ENCODE measurements at regions of chr1 and their contacts with region 1.

Region 1: DNA sequence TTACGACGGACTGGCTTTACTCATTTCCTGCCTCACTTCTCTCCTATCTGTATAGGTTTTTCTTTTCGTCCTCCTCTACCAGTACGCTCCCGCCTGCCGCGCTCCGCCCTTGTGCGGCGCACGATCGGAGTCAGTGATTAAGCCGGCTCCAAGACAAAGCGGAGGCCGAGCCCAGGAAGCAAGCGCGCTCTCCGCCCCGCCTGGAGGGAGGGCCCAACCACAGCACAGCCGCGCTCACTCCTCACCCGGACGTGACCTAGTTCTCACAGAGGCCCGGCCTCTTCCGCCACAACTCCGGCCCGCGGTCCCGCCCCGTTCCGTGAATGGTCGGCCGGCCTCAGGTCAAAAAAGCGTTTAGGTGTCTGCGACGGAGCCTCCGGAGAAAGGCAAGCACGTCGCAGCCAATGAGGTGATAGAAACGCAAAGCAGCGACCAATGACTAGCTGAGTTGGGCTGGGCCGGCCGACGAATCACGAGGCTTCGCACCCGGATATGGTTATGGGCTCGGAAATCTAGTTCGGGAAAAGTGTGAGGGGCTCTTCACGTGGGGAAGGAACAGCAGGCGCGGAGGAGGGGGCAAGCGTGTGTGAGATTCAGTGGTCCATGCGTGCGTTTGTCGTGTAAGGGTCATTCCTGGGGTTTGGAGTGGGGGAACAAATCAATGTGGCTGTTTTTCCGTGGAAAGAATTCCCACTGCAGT is at the start of gene METTL13:
- DNase-seq: peak; percentile 99
- ATAC-seq: peak; percentile 98
- H3K4me3 ChIP-seq: peak within 1 kb of the TSS; percentile 81
- H3K27ac ChIP-seq: peak within 1 kb of the TSS; percentile 77
- H3K4me1 ChIP-seq: no peaks in the 10 kb centered on the region
- H3K27me3 ChIP-seq: no peaks in the 10 kb centered on the region
- CTCF ChIP-seq: 0 out of 2 replicates have a peak, but pooled peaks have one; percentile 6
- POLR2A ChIP-seq: peak; percentile 87
- RAD21 ChIP-seq: 0 out of 2 replicates have a peak, but pooled peaks have one; percentile 9
- total RNA-seq, gene METTL13: 25.8 and 26.3 TPM in 2 replicates

Region 2: DNA sequence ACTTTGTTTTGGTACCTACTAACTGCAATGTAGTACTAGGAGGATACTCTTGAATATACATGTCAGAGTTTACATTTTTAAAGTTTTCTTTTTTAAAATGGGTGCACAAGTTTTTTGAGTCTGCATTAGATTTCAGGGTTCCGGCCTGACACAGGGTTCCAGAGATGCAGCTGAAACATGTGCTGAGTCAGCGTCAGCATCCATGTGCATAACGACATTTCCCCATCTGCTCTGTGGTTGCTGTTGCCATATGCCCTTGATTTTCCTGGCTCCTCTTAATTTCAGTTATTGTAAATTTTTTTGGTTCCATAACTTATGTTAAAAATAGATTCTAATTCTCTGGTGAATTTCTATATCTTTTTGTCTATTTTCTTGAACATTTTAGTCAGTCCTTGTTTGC is 12.2 kb before region 1 on chr1:
- CTCF ChIA-PET with region 1: no interaction called
- POLR2A ChIA-PET with region 1: no interaction called
- dilution Hi-C with region 1: no loop called
- in situ Hi-C with region 1: no loop called
- intact Hi-C with region 1: loop called (anchors 1 kb)
- DNase-seq: no peak
- ATAC-seq: no peak
- H3K4me3 ChIP-seq: no peak overlapping the region
- H3K27ac ChIP-seq: no peak overlapping the region
- H3K4me1 ChIP-seq: no peaks in the 10 kb centered on the region; the same call in 1 of the 2 replicates
- H3K27me3 ChIP-seq: no peaks in the 10 kb centered on the region
- CTCF ChIP-seq: no peak
- POLR2A ChIP-seq: no peak
- RAD21 ChIP-seq: no peak

Region 3: DNA sequence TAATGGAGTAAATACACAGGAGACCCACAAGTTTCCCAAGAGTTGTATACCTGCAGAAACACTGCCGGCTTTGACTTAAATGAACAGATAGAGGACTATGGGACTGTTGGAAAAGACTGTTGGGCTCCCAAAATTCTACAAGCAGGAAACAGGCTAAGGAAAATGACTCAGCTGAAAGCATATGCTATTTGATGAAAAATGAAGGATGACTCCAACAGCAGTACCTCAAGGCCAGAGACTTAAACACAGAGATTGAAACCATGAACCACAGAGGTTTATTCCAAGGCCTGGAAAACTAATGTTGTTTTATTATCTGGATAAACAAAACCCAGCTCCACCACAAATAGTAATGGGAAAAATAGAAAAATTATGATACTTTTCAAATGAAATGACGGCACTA is 1081.7 kb after region 1 on chr1:
- CTCF ChIA-PET with region 1: no interaction called
- POLR2A ChIA-PET with region 1: no interaction called
- dilution Hi-C with region 1: no loop called
- in situ Hi-C with region 1: no loop called
- intact Hi-C with region 1: no loop called
- DNase-seq: peak; percentile 34
- ATAC-seq: no peak
- H3K4me3 ChIP-seq: no peak overlapping the region
- H3K27ac ChIP-seq: no peak overlapping the region
- H3K4me1 ChIP-seq: no peaks in the 10 kb centered on the region; the same call in 1 of the 2 replicates
- H3K27me3 ChIP-seq: no peaks in the 10 kb centered on the region
- CTCF ChIP-seq: no peak
- POLR2A ChIP-seq: no peak
- RAD21 ChIP-seq: no peak